ENCODE measurements at regions of chrX and their contacts with region 1.

Region 1: GRCh38 chrX:24838629-24839028 is 144.9 kb downstream of the POLA1 start:
- DNase-seq: peak; percentile 49
- H3K4me3 Mint-ChIP-seq: no peak overlapping the region
- H3K27ac Mint-ChIP-seq: no peak overlapping the region
- H3K4me1 Mint-ChIP-seq: no peaks in the 10 kb centered on the region
- H3K27me3 Mint-ChIP-seq: no peaks in the 10 kb centered on the region
- CTCF ChIP-seq: peak; percentile 51

Region 2: DNA sequence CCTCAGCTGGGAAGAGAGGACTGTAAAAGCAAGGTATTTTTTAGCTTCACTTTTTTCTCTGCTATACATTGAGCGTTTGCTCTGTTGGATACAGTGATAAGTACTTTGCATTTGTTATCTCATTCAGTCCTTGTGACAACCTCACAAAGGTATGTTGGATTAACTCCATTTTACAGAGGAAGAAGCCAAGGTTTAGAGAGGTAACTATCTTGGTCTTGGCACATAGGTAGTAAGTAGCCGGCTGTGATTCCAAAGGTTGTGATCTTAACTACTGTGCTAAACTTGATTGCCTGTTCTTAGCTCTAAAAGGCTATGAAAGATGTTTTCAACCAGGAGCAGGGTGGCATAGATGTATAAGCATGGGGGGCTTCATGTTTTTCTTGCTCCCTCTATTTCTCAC is 10.5 kb before region 1 on chrX:
- CTCF ChIA-PET with region 1: interaction called, 27 read pairs
- POLR2A ChIA-PET with region 1: interaction called, 5 read pairs
- intact Hi-C with region 1: no loop called
- DNase-seq: no peak
- H3K4me3 Mint-ChIP-seq: no peak overlapping the region
- H3K27ac Mint-ChIP-seq: no peak overlapping the region
- H3K4me1 Mint-ChIP-seq: no peaks in the 10 kb centered on the region
- H3K27me3 Mint-ChIP-seq: no peaks in the 10 kb centered on the region
- CTCF ChIP-seq: no peak

Region 3: DNA sequence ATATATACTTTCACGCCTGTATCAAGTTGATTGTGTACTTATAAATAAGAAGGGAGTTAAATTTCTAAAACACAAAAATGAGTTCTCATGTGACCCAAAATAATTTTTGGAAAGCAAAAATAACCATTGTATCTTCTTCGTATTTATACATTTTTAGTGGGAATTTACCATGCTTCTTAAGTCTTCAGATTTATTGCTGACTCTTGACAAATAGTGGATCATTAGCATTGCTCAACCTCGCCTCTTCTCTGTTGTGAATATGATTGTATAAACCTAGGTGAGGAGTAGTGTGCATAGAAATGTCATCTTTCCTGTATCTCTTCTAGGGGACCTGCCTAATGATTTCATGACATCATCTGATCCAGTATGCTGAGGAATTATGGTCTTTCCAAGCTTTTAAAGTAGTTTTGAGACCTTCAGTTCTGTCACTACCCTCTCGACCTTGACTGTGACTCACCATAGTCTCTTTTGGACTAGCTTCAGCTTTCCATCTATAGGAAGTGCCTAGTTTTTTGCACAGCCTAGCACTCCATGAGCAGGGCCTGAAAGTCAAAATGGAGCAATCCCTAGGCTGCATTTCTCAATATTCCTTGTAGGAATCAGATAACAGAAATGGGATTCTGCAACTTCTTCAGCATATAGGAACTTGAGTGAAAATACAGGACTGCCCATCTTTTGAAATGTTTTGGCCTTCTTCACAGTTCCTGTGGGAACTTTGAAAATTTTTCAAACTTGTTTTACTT is 19.5 kb after region 1 on chrX:
- CTCF ChIA-PET with region 1: interaction called, 15 read pairs
- POLR2A ChIA-PET with region 1: interaction called, 3 read pairs
- intact Hi-C with region 1: no loop called
- DNase-seq: peak; percentile 73
- H3K4me3 Mint-ChIP-seq: no peak overlapping the region
- H3K27ac Mint-ChIP-seq: no peak overlapping the region
- H3K4me1 Mint-ChIP-seq: peaks cover 5% of the 10 kb centered on the region
- H3K27me3 Mint-ChIP-seq: peaks cover 17% of the 10 kb centered on the region
- CTCF ChIP-seq: no peak

Region 4: DNA sequence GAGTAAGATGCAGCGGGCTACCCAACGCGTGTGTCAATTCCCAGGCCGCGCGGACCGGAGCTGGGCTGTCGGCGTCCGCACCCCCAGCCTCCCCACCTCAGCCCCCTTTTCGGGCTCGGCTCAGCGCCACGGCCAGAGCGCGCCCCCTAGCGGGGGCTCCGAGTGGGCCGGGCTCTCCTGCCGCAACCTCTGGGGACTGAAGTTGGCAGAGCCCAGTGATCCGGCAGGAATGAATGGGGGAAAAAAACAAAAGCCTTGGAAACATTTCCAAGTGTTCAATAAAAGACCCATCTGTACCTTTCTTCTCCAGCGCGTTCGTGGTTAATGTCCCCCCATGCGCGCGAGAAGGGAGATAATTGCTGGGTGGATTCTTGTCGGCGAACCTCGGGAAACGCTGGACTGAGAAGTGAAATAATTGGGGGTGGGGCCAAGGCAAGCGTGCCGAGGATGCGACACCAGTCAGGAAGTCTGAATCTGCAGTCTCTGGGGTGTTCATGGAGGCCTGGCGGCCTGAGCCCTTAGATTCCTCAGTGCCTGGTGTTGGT is 182.3 kb after region 1 on chrX:
- CTCF ChIA-PET with region 1: no interaction called
- POLR2A ChIA-PET with region 1: no interaction called
- intact Hi-C with region 1: loop called (anchors 10 kb)
- DNase-seq: peak; percentile 11
- H3K4me3 Mint-ChIP-seq: no peak overlapping the region
- H3K27ac Mint-ChIP-seq: no peak overlapping the region
- H3K4me1 Mint-ChIP-seq: peaks cover 5% of the 10 kb centered on the region
- H3K27me3 Mint-ChIP-seq: peaks cover 52% of the 10 kb centered on the region
- CTCF ChIP-seq: peak; percentile 43

Region 5: GRCh38 chrX:25131055-25131454 is 292.4 kb after region 1 on chrX:
- CTCF ChIA-PET with region 1: interaction called, 11 read pairs
- POLR2A ChIA-PET with region 1: no interaction called
- intact Hi-C with region 1: no loop called
- DNase-seq: peak; percentile 5
- H3K4me3 Mint-ChIP-seq: no peak overlapping the region
- H3K27ac Mint-ChIP-seq: no peak overlapping the region
- H3K4me1 Mint-ChIP-seq: no peaks in the 10 kb centered on the region
- H3K27me3 Mint-ChIP-seq: peaks cover 49% of the 10 kb centered on the region
- CTCF ChIP-seq: no peak